ENCODE measurements at regions of chr13 and their contacts with region 1.

Region 1: DNA sequence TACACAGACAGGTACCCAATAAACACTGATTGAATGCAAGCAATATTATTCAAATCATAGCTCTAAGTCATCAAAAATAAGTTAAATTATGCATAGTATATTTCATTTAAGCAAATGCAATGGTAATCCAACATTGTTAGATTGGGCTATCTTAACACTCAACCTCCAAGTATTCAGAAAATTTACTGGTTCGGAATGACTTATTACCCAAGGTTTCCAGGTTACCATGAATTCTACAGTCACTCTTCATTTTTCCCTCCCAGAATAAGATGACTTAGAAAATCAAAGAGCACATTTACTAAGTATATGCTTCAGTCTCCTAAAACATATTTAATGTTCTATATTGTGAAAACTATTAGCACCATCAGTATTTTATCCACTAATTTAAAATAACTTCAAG is 6.0 kb downstream of the UBL3 start:
- DNase-seq: no peak
- H3K4me3 ChIP-seq: no peak overlapping the region
- H3K27ac ChIP-seq: no peak overlapping the region
- H3K4me1 ChIP-seq: peaks cover 8 to 22% (median 12%) of the 10 kb centered on the region in 4 experiments
- H3K27me3 ChIP-seq: no peaks in the 10 kb centered on the region

Region 2: GRCh38 chr13:29817604-29818378 is 26.6 kb before region 1 on chr13:
- CTCF ChIA-PET with region 1: interaction called, 12 read pairs
- POLR2A ChIA-PET with region 1: no interaction called
- DNase-seq: peak; percentile 24 to 76 (median 68)
- H3K4me3 ChIP-seq: peak overlapping the region in 6 of 7 experiments; percentile 23 to 67 (median 38)
- H3K27ac ChIP-seq: peak overlapping the region; percentile 42 to 84
- H3K4me1 ChIP-seq: peaks cover 13 to 40% (median 28%) of the 10 kb centered on the region in 4 experiments
- H3K27me3 ChIP-seq: no peaks in the 10 kb centered on the region

Measured in common myeloid progenitor, CD34-positive (primary cell).